ENCODE measurements at regions of chr17 and their contacts with region 1.

Region 1: DNA sequence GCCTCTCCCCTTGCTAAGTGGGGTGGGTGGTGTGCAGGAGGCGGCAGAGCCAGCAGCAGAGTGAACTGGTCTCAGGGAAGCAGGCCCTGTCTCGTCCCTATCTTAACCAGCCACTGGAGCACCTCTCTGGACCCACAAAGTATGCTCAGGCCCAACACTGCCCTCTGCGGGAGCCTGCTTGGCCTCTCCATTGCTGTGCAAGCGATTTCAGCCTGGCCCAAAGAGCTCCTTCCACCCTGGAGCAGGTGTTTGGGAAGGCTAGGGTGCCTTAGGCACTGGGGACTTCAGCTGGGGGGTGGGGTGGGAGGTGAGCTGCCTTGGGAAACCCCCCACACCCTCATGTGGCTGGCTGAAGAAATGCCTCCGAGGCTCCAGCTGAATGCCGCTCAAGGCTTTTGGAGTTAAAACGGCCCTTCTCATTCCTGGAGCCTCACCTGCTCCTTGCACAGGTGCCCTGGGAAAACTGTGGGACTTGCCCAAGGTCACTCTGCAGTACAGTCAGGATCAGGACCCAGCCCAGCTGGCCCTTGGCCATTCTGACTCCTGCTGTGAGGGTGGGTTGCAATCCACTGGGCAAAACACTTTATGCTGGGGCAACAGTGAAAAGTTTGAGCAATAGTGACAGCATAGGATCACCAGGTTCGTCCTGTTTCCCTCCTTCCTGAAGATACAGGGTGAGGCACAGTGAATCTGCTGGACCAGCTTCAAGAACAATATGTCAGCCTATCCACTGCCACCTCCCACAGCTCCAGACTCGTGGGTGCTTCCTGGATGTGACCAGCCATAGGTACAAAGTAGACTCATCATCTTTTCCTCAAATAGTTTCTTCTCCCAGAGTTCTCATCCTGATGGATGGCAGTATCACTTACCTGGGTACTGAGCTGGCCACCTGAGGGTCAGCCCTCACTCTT is 5.9 kb upstream of the UBE2O start:
- DNase-seq: no peak
- H3K4me3 ChIP-seq: no peak overlapping the region
- H3K27ac ChIP-seq: no peak overlapping the region
- H3K27me3 ChIP-seq: no peaks in the 10 kb centered on the region
- CTCF ChIP-seq: peak; percentile 82

Region 2: GRCh38 chr17:76397687-76398487 is 60.9 kb before region 1 on chr17:
- CTCF ChIA-PET with region 1: interaction called, 22 read pairs
- POLR2A ChIA-PET with region 1: no interaction called
- DNase-seq: peak; percentile 77
- H3K4me3 ChIP-seq: no peak overlapping the region
- H3K27ac ChIP-seq: no peak overlapping the region
- H3K27me3 ChIP-seq: no peaks in the 10 kb centered on the region
- CTCF ChIP-seq: peak; percentile 97

Region 3: GRCh38 chr17:76414334-76415295 is 44.2 kb before region 1 on chr17:
- CTCF ChIA-PET with region 1: interaction called, 78 read pairs
- POLR2A ChIA-PET with region 1: interaction called, 6 read pairs
- DNase-seq: no peak
- H3K4me3 ChIP-seq: no peak overlapping the region
- H3K27ac ChIP-seq: no peak overlapping the region
- H3K27me3 ChIP-seq: no peaks in the 10 kb centered on the region
- CTCF ChIP-seq: no peak

Region 4: DNA sequence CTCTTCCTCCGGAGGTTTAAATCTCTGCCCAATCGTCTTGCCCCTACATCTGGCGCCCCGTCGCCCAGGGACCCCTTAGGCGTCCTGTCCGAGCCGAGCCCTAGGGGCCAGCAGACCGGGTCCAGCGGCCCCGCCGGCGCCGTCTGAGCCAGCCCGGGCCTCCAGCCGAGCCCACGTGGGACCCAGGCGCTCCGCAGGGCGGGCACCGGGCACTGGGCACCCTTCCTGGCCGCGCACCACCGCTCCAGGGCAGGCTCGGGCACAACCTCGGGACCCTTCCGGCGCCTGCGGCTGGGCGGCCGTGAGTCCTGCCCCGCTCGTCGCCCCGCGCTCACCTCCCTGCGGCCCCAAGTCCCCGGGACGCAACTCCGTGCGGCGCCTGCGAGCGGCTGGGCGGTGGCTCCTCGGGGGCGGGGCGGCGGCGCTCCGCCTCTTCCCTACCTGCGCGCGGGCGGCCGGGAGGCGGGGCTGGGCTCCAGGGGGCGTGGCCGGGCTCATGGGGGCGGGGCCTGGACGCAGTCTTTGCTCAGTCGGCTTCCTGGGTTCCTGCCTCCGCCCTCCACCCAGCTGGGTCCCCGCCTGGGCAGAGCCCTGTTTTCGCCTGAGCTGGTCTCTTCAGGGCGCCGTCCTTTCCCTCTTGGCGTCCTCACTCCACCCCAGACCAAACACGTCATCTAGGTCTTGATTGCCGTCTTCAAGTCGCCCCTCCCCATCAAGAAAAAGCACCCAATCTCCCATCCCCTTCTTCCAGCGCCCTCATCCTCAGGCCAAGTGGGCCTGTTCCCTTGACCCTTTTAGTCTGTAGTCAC is 42.4 kb after region 1 on chr17 and contains the start of gene RHBDF2:
- CTCF ChIA-PET with region 1: interaction called, 121 read pairs
- POLR2A ChIA-PET with region 1: no interaction called
- DNase-seq: no peak
- H3K4me3 ChIP-seq: peak within 1 kb of the TSS; percentile 66
- H3K27ac ChIP-seq: peak within 1 kb of the TSS; percentile 47
- H3K27me3 ChIP-seq: no peaks in the 10 kb centered on the region
- CTCF ChIP-seq: no peak
- polyA plus RNA-seq, gene RHBDF2: 5.4 and 8.7 TPM in 2 replicates

Region 5: DNA sequence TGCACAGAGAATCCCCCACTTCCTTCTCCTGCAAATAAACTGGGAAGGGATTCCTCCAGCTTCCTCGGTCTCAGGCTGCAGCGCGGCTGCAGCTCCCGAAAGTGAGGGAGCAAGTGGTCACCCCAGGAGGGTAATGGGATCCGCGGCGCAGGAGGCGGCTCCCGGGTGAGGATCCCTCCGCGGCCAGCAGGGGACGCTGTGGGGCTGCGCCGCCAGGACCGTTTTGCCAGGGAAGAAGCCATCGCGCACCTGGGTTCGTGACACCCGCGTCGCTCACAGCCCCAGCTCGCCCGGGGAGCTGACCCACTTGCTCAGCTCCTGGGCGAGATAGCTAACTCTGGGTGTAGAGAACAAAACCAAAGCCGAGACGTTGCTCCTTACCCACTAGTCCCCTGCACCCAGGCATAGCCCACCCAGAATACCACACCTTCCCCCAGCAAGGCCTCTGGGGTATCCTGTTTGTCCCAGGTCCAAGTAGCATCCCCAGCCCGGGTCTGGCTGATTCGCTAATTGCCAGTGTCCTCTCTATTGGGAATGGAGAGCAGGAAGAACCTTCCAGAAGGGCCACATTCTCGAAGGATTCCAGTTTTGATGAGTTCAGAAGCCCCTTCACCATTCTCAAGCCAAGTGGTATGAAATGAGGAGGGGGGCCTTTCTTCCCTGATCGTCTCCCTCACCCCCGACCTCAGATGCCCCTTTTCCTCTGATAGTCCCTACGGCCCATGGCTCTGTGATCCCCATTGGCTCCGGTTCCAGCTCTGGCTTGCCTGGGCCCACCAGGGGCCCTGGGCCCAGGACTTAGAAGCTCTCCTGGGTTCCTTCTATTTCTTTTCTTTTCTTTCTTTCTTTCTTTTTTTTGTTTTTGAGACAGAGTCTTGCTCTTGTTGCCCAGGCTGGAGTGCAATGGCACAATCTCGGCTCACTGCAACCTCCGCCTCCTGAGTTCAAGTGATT is 64.5 kb after region 1 on chr17:
- CTCF ChIA-PET with region 1: interaction called, 12 read pairs
- POLR2A ChIA-PET with region 1: no interaction called
- DNase-seq: no peak
- H3K4me3 ChIP-seq: no peak overlapping the region
- H3K27ac ChIP-seq: no peak overlapping the region
- H3K27me3 ChIP-seq: no peaks in the 10 kb centered on the region
- CTCF ChIP-seq: peak; percentile 99

Region 6: GRCh38 chr17:76614912-76615617 is 156.2 kb after region 1 on chr17:
- CTCF ChIA-PET with region 1: no interaction called
- POLR2A ChIA-PET with region 1: no interaction called
- DNase-seq: no peak
- H3K4me3 ChIP-seq: no peak overlapping the region
- H3K27ac ChIP-seq: no peak overlapping the region
- H3K27me3 ChIP-seq: no peaks in the 10 kb centered on the region
- CTCF ChIP-seq: no peak

Region 7: DNA sequence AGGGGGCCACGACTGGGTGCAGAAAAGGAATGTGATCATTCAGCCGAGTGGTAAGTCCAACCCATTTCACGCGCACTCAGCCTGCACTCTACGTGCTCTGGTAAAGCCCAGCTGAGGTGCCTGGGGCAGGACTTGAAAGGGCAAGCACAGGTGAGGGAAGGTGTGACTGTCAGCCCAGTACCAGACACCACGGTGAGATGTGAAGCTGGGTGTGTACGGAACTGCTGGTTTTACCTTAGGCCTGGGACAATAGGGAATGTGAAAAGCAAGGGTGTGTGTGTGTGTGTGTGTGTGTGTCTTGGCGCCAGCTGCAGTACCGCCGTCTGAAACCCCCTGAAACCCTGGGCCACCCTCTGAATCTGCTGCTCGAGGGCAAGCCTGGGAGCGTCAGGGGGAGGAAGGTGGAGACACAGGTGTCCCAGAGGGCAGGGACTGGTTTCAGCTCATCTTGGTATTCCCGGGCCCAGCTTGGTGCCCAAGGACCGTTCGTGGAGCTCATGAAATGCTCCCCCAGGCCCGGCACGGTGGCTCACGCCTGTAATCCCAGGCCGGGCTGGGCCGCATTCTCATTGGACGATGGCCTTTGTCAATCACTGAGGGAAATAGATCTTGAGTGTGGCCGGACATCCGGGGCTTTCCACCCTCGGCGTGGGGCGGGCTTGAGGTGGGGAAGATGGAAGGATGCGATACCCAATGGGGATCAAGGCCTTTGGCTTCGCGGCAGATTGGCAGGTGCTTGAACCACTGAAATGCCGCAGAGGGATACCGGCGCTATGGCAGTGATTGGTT is 212.5 kb after region 1 on chr17:
- CTCF ChIA-PET with region 1: no interaction called
- POLR2A ChIA-PET with region 1: no interaction called
- DNase-seq: peak; percentile 100
- H3K4me3 ChIP-seq: peak overlapping the region; percentile 75
- H3K27ac ChIP-seq: peak overlapping the region; percentile 61
- H3K27me3 ChIP-seq: no peaks in the 10 kb centered on the region
- CTCF ChIP-seq: no peak

Measured in AG04450 (cell line).